Heart left ventricle (tissue), 16 donors: ENCODE measurements at regions of chr13 and their contacts with region 1.

Region 1: DNA sequence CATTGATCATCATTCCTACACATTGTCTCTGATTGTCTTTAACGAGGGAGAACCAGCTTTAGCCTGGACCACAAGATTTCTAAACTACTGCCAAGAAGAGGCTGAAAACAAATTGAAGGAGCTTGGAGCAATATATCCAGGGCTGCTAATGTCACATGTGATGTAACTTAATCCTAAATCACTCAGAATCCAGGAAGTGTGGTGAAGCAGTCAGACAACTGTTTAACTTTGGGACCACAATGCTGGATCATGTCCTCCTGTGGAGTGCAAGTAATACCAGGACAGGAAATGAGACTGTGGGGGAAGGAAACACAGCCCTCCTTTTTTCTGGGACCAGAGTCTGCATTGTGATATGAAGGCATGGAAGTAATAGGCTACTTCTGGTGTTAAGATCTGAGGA is 430.2 kb downstream of the KCTD12 start:
- DNase-seq: no peak
- ATAC-seq: peak in 1 of 4 donors; percentile 62
- H3K4me3 ChIP-seq: no peak overlapping the region
- H3K27ac ChIP-seq: no peak overlapping the region
- H3K4me1 ChIP-seq: no peaks in the 10 kb centered on the region
- H3K27me3 ChIP-seq: no peaks in the 10 kb centered on the region
- CTCF ChIP-seq: no peak
- POLR2A ChIP-seq: no peak

Region 2: DNA sequence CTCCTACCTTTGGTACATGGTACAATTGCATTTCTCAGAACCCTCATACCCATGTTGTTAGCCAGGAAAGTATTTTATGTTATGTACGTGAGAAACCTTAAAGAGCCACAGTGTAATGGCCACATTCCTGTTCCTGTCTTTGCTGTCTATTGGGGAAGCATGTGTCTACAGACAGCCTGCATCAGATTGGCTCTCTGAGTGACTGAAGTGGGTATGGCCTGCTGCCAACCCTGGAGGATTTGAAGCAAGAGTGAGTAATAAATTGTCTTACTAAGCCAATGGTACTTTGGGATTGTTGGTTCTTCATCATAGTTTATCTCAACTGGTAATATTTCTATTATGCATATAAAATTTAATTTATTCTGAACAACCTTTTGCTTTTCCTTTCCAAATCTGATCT is 245.7 kb before region 1 on chr13:
- intact Hi-C with region 1: loop called in 1 of 10 experiments (anchors 10 kb)
- DNase-seq: peak in 4 of 5 donors; percentile 27 to 67 (median 48)
- ATAC-seq: peak in 2 of 4 donors; percentile 53 to 64
- H3K4me3 ChIP-seq: no peak overlapping the region
- H3K27ac ChIP-seq: no peak overlapping the region
- H3K4me1 ChIP-seq: peaks cover 0 to 3% (median 0%) of the 10 kb centered on the region in 12 donors
- H3K27me3 ChIP-seq: no peaks in the 10 kb centered on the region
- CTCF ChIP-seq: no peak
- POLR2A ChIP-seq: no peak

Region 3: GRCh38 chr13:76745261-76746200 is 289.6 kb after region 1 on chr13:
- intact Hi-C with region 1: no loop called
- DNase-seq: no peak
- ATAC-seq: peak; percentile 34 to 60 (median 48)
- H3K4me3 ChIP-seq: peak overlapping the region in 1 of 12 donors; percentile 13
- H3K27ac ChIP-seq: peak overlapping the region in 1 of 12 donors; percentile 85
- H3K4me1 ChIP-seq: peaks cover 0 to 32% (median 0%) of the 10 kb centered on the region in 12 donors
- H3K27me3 ChIP-seq: no peaks in the 10 kb centered on the region
- CTCF ChIP-seq: no peak
- POLR2A ChIP-seq: no peak